MCF 10A (cell line): ENCODE measurements at regions of chr12 and their contacts with region 1.

Region 1: DNA sequence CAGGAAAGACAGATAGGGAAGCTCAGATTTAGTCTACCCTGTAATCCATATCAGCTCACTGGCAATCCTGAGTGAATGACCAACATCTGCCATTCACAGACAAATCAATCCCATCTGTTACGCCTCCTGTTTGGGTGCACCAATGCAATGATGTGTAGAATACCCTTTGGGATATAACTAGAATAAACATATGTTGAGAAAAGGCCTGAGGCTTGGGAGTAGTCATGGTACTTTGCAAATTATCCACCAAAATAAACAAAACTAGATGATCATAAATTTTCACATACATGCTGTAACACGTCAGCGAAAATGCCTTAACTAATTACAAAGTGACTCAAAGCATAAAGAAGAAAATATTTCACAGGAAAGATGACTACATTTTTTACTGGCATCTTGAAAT is 78.8 kb downstream of the KCNC2 start:
- DNase-seq: peak; percentile 86
- H3K4me3 Mint-ChIP-seq: no peak overlapping the region
- H3K27ac Mint-ChIP-seq: peak overlapping the region; percentile 74
- H3K4me1 Mint-ChIP-seq: peaks cover 17% of the 10 kb centered on the region
- H3K27me3 Mint-ChIP-seq: no peaks in the 10 kb centered on the region
- CTCF ChIP-seq: no peak

Region 2: DNA sequence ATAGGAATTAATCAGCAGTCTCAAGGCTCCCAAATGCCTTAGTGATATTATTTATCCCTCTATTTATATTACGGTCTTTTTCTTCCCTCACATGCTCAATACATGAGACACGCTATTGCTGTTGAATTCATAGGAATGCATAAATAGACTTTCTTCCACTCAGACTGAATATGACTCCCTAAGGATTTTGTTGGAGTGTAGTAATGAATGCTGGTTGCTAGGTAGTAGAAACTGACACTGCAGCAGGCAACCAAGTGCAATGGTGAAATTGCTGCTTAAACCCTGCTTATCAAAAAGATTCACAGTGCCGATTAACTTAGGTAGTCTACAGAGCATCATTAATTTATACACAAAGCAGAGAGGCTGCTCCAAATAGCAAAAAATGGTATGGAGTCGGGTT is 89.4 kb before region 1 on chr12:
- CTCF ChIA-PET with region 1: no interaction called
- POLR2A ChIA-PET with region 1: no interaction called
- intact Hi-C with region 1: no loop called
- DNase-seq: no peak
- H3K4me3 Mint-ChIP-seq: no peak overlapping the region
- H3K27ac Mint-ChIP-seq: no peak overlapping the region
- H3K4me1 Mint-ChIP-seq: no peaks in the 10 kb centered on the region
- H3K27me3 Mint-ChIP-seq: no peaks in the 10 kb centered on the region
- CTCF ChIP-seq: no peak

Region 3: DNA sequence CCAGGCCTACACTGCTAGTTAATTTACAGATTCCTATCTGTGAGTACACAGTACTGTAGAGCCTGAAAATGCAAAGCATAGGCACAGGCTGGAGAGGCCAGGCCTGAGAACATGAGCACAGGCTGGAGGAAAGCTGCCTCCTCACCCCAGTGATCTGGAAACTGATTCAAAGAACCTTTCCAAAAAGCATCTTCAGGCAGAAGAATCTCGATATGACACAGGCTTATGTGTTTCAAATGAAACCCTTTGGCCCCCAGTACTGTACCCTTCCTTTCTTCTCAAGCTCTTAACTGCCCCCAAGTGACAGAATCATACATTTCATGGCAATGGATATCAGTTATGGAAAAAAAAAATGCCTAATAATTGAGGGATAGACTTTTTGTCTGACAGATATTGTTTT is 43.2 kb before region 1 on chr12:
- CTCF ChIA-PET with region 1: no interaction called
- POLR2A ChIA-PET with region 1: no interaction called
- intact Hi-C with region 1: no loop called
- DNase-seq: peak; percentile 11
- H3K4me3 Mint-ChIP-seq: no peak overlapping the region
- H3K27ac Mint-ChIP-seq: no peak overlapping the region
- H3K4me1 Mint-ChIP-seq: no peaks in the 10 kb centered on the region
- H3K27me3 Mint-ChIP-seq: no peaks in the 10 kb centered on the region
- CTCF ChIP-seq: no peak

Region 4: GRCh38 chr12:75120311-75120711 is 10.5 kb before region 1 on chr12:
- CTCF ChIA-PET with region 1: interaction called, 3 read pairs
- POLR2A ChIA-PET with region 1: interaction called, 12 read pairs
- intact Hi-C with region 1: no loop called
- DNase-seq: peak; percentile 90
- H3K4me3 Mint-ChIP-seq: no peak overlapping the region
- H3K27ac Mint-ChIP-seq: peak overlapping the region; percentile 50
- H3K4me1 Mint-ChIP-seq: peaks cover 14% of the 10 kb centered on the region
- H3K27me3 Mint-ChIP-seq: no peaks in the 10 kb centered on the region
- CTCF ChIP-seq: no peak